CD8-positive, alpha-beta memory T cell (primary cell): ENCODE measurements at regions of chr1 and their contacts with region 1.

Region 1: DNA sequence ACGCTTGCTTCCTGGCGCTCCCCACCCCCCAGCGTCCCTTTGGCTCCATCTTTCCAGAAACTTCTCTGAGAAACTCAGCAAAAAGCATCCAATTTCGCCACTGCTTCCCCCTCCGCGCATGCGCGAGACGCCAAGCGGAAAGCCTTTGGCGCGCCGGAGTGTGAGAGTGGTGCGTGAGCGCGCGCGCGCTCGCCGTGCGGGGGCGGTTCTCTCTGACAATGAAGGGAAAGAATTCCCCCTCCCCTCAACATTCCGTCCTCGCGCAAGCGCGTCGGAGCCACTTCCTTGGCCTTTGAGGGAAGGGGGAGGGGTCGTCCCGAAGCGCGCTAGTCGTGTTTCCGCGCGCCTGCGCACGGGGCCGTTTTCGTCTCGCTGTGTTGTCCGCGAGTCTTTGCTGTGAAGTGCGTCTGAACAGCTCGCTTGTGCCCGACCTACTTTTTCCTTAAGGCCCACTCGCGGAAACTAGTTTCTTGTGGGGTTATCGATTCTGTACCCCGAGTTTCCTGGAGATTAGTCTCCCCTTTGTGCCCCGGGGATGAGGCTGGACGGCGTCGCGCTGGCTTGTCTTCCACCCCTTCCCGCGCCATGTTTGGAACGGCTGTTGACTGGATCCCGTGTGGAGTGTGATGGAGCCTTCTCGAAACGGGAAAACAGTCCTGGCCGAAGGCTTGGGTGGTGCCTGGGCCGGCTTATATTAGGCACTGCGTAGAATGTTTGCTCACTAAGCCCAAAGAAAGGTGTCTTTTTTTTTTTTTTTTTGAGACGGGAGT is 11.6 kb upstream of the SPEN start:
- DNase-seq: peak; percentile 98 to 100 (median 98)
- H3K4me3 ChIP-seq: peak overlapping the region; percentile 82
- H3K4me3 Mint-ChIP-seq: peak overlapping the region; percentile 90 to 98 (median 96)
- H3K27ac ChIP-seq: peak overlapping the region; percentile 97
- H3K27ac Mint-ChIP-seq: peak overlapping the region; percentile 97 to 99 (median 99)
- H3K4me1 ChIP-seq: peaks cover 13% of the 10 kb centered on the region
- H3K4me1 Mint-ChIP-seq: peaks cover 19 to 37% (median 28%) of the 10 kb centered on the region in 3 donors
- H3K27me3 ChIP-seq: no peaks in the 10 kb centered on the region
- H3K27me3 Mint-ChIP-seq: peaks cover 0 to 2% of the 10 kb centered on the region in 2 donors

Region 2: GRCh38 chr1:15598436-15598835 is 237.5 kb before region 1 on chr1:
- CTCF ChIA-PET with region 1: no interaction called
- POLR2A ChIA-PET with region 1: no interaction called
- DNase-seq: no peak
- H3K4me3 ChIP-seq: no peak overlapping the region
- H3K4me3 Mint-ChIP-seq: peak overlapping the region in 1 of 7 donors; percentile 27
- H3K27ac ChIP-seq: no peak overlapping the region
- H3K27ac Mint-ChIP-seq: no peak overlapping the region
- H3K4me1 ChIP-seq: peaks cover 4% of the 10 kb centered on the region
- H3K4me1 Mint-ChIP-seq: peaks cover 4 to 8% (median 5%) of the 10 kb centered on the region in 3 donors
- H3K27me3 ChIP-seq: peaks cover 5% of the 10 kb centered on the region
- H3K27me3 Mint-ChIP-seq: peaks cover under 1 to 8% of the 10 kb centered on the region in 2 donors

Region 3: GRCh38 chr1:15760520-15761211 is 75.3 kb before region 1 on chr1:
- CTCF ChIA-PET with region 1: no interaction called
- POLR2A ChIA-PET with region 1: no interaction called
- DNase-seq: no peak
- H3K4me3 ChIP-seq: no peak overlapping the region
- H3K4me3 Mint-ChIP-seq: no peak overlapping the region
- H3K27ac ChIP-seq: no peak overlapping the region
- H3K27ac Mint-ChIP-seq: no peak overlapping the region
- H3K4me1 ChIP-seq: peaks cover 10% of the 10 kb centered on the region
- H3K4me1 Mint-ChIP-seq: peaks cover 5 to 24% (median 12%) of the 10 kb centered on the region in 3 donors
- H3K27me3 ChIP-seq: peaks cover 24% of the 10 kb centered on the region
- H3K27me3 Mint-ChIP-seq: peaks cover 35 to 62% of the 10 kb centered on the region in 2 donors

Region 4: DNA sequence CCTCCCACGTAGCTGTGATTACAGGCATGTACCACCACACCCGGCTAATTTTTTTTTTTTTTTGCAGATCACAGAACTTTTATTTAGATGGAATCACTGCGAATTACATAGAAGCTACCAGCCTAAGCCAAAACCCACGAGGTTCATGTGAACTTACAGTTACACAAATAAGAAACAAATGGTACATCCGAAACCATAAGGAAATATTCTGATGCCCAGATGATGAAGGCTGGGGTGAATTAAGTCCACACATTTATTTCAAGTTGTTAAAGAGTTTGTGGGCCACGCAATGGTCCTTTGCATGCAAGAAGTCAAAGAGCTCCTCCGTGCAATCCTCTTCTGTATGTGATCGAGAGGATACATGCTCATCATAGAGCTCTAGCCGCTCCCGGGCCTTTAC is 28.8 kb before region 1 on chr1:
- CTCF ChIA-PET with region 1: no interaction called
- POLR2A ChIA-PET with region 1: no interaction called
- DNase-seq: no peak
- H3K4me3 ChIP-seq: no peak overlapping the region
- H3K4me3 Mint-ChIP-seq: no peak overlapping the region
- H3K27ac ChIP-seq: no peak overlapping the region
- H3K27ac Mint-ChIP-seq: no peak overlapping the region
- H3K4me1 ChIP-seq: no peaks in the 10 kb centered on the region
- H3K4me1 Mint-ChIP-seq: peaks cover 0 to 3% (median 0%) of the 10 kb centered on the region in 3 donors
- H3K27me3 ChIP-seq: no peaks in the 10 kb centered on the region
- H3K27me3 Mint-ChIP-seq: peaks cover 4% of the 10 kb centered on the region in 2 donors

Region 5: GRCh38 chr1:15820478-15820877 is 15.4 kb before region 1 on chr1:
- CTCF ChIA-PET with region 1: interaction called, 49 read pairs
- POLR2A ChIA-PET with region 1: interaction called, 16 read pairs
- DNase-seq: no peak
- H3K4me3 ChIP-seq: no peak overlapping the region
- H3K4me3 Mint-ChIP-seq: no peak overlapping the region
- H3K27ac ChIP-seq: no peak overlapping the region
- H3K27ac Mint-ChIP-seq: no peak overlapping the region
- H3K4me1 ChIP-seq: no peaks in the 10 kb centered on the region
- H3K4me1 Mint-ChIP-seq: peaks cover 3 to 4% (median 3%) of the 10 kb centered on the region in 3 donors
- H3K27me3 ChIP-seq: no peaks in the 10 kb centered on the region
- H3K27me3 Mint-ChIP-seq: peaks cover 0 to 4% of the 10 kb centered on the region in 2 donors

Region 6: DNA sequence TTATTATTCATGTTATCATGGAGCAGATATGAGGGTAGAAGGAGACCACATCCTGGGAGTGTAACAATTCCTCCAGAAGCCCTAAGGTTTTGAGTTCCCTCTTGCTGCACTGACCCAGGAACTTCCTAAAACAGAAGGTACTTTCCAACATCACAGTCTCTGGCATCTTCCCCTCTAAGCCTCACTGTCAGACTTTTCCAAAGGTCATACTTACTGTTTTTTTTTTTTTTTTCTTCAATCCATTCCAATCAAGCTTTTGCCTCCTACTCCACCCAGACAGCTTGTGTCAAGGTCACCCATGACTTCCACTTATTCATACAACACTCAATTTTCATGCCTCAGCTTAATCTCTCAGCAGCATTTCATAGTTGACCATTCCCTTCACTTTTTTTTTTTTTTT is 10.1 kb before region 1 on chr1:
- CTCF ChIA-PET with region 1: interaction called, 10 read pairs
- POLR2A ChIA-PET with region 1: interaction called, 6 read pairs
- DNase-seq: no peak
- H3K4me3 ChIP-seq: no peak overlapping the region
- H3K4me3 Mint-ChIP-seq: no peak overlapping the region
- H3K27ac ChIP-seq: no peak overlapping the region
- H3K27ac Mint-ChIP-seq: no peak overlapping the region
- H3K4me1 ChIP-seq: no peaks in the 10 kb centered on the region
- H3K4me1 Mint-ChIP-seq: peaks cover 7 to 15% (median 11%) of the 10 kb centered on the region in 3 donors
- H3K27me3 ChIP-seq: no peaks in the 10 kb centered on the region
- H3K27me3 Mint-ChIP-seq: no peaks in the 10 kb centered on the region

Region 7: GRCh38 chr1:15847100-15847892 is 11.4 kb after region 1 on chr1 and contains the start of gene SPEN:
- CTCF ChIA-PET with region 1: interaction called, 38 read pairs
- POLR2A ChIA-PET with region 1: interaction called, 319 read pairs
- DNase-seq: peak; percentile 97 to 99 (median 99)
- H3K4me3 ChIP-seq: peak within 1 kb of the TSS; percentile 97
- H3K4me3 Mint-ChIP-seq: peak within 1 kb of the TSS; percentile 95 to 99 (median 97)
- H3K27ac ChIP-seq: peak within 1 kb of the TSS; percentile 94
- H3K27ac Mint-ChIP-seq: peak within 1 kb of the TSS; percentile 97 to 99 (median 98)
- H3K4me1 ChIP-seq: peaks cover 40% of the 10 kb centered on the region
- H3K4me1 Mint-ChIP-seq: peaks cover 36 to 52% (median 46%) of the 10 kb centered on the region in 3 donors
- H3K27me3 ChIP-seq: no peaks in the 10 kb centered on the region
- H3K27me3 Mint-ChIP-seq: no peaks in the 10 kb centered on the region
- total RNA-seq, gene SPEN: 63.1 to 66.3 TPM